Naive thymus-derived CD8-positive, alpha-beta T cell (primary cell): ENCODE measurements at regions of chr3 and their contacts with region 1.

Region 1: DNA sequence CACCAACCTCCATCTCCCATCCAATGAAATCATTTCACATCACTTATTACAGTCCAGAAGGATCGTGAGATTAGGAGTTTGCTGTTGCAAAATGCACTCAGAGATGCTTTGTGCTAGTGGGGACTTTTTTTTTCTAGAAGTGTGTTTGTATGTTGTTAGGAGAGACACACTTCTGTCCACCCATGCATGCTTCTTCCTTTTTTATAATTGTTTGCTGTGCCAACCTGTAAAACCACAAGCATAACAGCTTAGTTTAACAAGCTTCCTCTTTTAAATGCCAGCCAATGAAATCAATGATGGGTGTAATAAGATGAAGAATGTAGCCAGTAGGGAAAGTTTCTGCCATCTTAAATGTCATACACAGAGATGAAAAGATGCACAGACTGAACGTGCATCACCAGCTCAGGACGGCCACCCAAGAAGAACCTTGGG is 305.6 kb upstream of the STT3B start:
- DNase-seq: peak in 5 of 10 donors; percentile 23 to 74 (median 42)
- ATAC-seq: peak; percentile 83
- H3K4me3 Mint-ChIP-seq: peak overlapping the region in 9 of 10 donors; percentile 54 to 83 (median 67)
- H3K27ac Mint-ChIP-seq: peak overlapping the region; percentile 77 to 97 (median 94)
- H3K4me1 Mint-ChIP-seq: peaks cover 44 to 95% (median 89%) of the 10 kb centered on the region in 4 donors
- H3K27me3 Mint-ChIP-seq: no peaks in the 10 kb centered on the region

Region 2: GRCh38 chr3:30644593-30645012 is 582.5 kb before region 1 on chr3:
- POLR2A ChIA-PET with region 1: no interaction called
- DNase-seq: peak in 8 of 10 donors; percentile 47 to 75 (median 65)
- ATAC-seq: peak; percentile 72 to 76
- H3K4me3 Mint-ChIP-seq: peak overlapping the region; percentile 60 to 87 (median 80)
- H3K27ac Mint-ChIP-seq: peak overlapping the region; percentile 91 to 100 (median 96)
- H3K4me1 Mint-ChIP-seq: peaks cover 52 to 98% (median 89%) of the 10 kb centered on the region in 4 donors
- H3K27me3 Mint-ChIP-seq: no peaks in the 10 kb centered on the region

Region 3: GRCh38 chr3:31213869-31214486 is 13.2 kb before region 1 on chr3:
- POLR2A ChIA-PET with region 1: interaction called, 37 read pairs
- DNase-seq: peak in 9 of 10 donors; percentile 7 to 77 (median 38)
- ATAC-seq: peak; percentile 88 to 90
- H3K4me3 Mint-ChIP-seq: peak overlapping the region; percentile 32 to 74 (median 64)
- H3K27ac Mint-ChIP-seq: peak overlapping the region in 8 of 10 donors; percentile 8 to 84 (median 54)
- H3K4me1 Mint-ChIP-seq: peaks cover 56 to 89% (median 87%) of the 10 kb centered on the region in 4 donors
- H3K27me3 Mint-ChIP-seq: no peaks in the 10 kb centered on the region

Region 4: GRCh38 chr3:32577581-32578556 is 1350.7 kb after region 1 on chr3:
- POLR2A ChIA-PET with region 1: no interaction called
- DNase-seq: peak in 1 of 10 donors; percentile 3
- ATAC-seq: peak; percentile 36 to 49
- H3K4me3 Mint-ChIP-seq: peak overlapping the region in 7 of 10 donors; percentile 29 to 72 (median 51)
- H3K27ac Mint-ChIP-seq: peak overlapping the region in 2 of 10 donors; percentile 0 to 30
- H3K4me1 Mint-ChIP-seq: peaks cover 6 to 20% (median 12%) of the 10 kb centered on the region in 4 donors
- H3K27me3 Mint-ChIP-seq: peaks cover 0 to 3% (median 0%) of the 10 kb centered on the region in 5 donors